ENCODE measurements at regions of chr1 and their contacts with region 1.

Region 1: GRCh38 chr1:63442141-63442475 is 74.7 kb downstream of the ALG6 start:
- DNase-seq: no peak
- H3K4me3 Mint-ChIP-seq: no peak overlapping the region
- H3K27ac Mint-ChIP-seq: no peak overlapping the region
- H3K4me1 Mint-ChIP-seq: no peaks in the 10 kb centered on the region
- H3K27me3 Mint-ChIP-seq: no peaks in the 10 kb centered on the region
- CTCF ChIP-seq: no peak

Region 2: GRCh38 chr1:62841587-62842169 is 600.4 kb before region 1 on chr1:
- CTCF ChIA-PET with region 1: no interaction called
- intact Hi-C with region 1: loop called (anchors 5 kb)
- DNase-seq: peak; percentile 44
- H3K4me3 Mint-ChIP-seq: no peak overlapping the region
- H3K27ac Mint-ChIP-seq: no peak overlapping the region
- H3K4me1 Mint-ChIP-seq: no peaks in the 10 kb centered on the region
- H3K27me3 Mint-ChIP-seq: no peaks in the 10 kb centered on the region
- CTCF ChIP-seq: peak; percentile 64

Region 3: GRCh38 chr1:63004868-63005267 is 437.2 kb before region 1 on chr1:
- CTCF ChIA-PET with region 1: no interaction called
- intact Hi-C with region 1: loop called (anchors 2 kb)
- DNase-seq: peak; percentile 44
- H3K4me3 Mint-ChIP-seq: no peak overlapping the region
- H3K27ac Mint-ChIP-seq: no peak overlapping the region
- H3K4me1 Mint-ChIP-seq: no peaks in the 10 kb centered on the region
- H3K27me3 Mint-ChIP-seq: peaks cover 59% of the 10 kb centered on the region
- CTCF ChIP-seq: peak; percentile 37

Region 4: GRCh38 chr1:63327417-63328139 is 114.5 kb before region 1 on chr1:
- CTCF ChIA-PET with region 1: no interaction called
- intact Hi-C with region 1: loop called (anchors 2 kb)
- DNase-seq: peak; percentile 85
- H3K4me3 Mint-ChIP-seq: no peak overlapping the region
- H3K27ac Mint-ChIP-seq: no peak overlapping the region
- H3K4me1 Mint-ChIP-seq: peaks cover 11% of the 10 kb centered on the region
- H3K27me3 Mint-ChIP-seq: peaks cover 61% of the 10 kb centered on the region
- CTCF ChIP-seq: peak; percentile 91

Region 5: GRCh38 chr1:63403386-63403785 is 38.7 kb before region 1 on chr1:
- CTCF ChIA-PET with region 1: no interaction called
- intact Hi-C with region 1: no loop called
- DNase-seq: no peak
- H3K4me3 Mint-ChIP-seq: no peak overlapping the region
- H3K27ac Mint-ChIP-seq: no peak overlapping the region
- H3K4me1 Mint-ChIP-seq: peaks cover 8% of the 10 kb centered on the region
- H3K27me3 Mint-ChIP-seq: no peaks in the 10 kb centered on the region
- CTCF ChIP-seq: no peak

Region 6: GRCh38 chr1:63935143-63935542 is 493.0 kb after region 1 on chr1:
- CTCF ChIA-PET with region 1: no interaction called
- intact Hi-C with region 1: no loop called
- DNase-seq: peak; percentile 53
- H3K4me3 Mint-ChIP-seq: no peak overlapping the region
- H3K27ac Mint-ChIP-seq: peak overlapping the region; percentile 30
- H3K4me1 Mint-ChIP-seq: peaks cover 51% of the 10 kb centered on the region
- H3K27me3 Mint-ChIP-seq: no peaks in the 10 kb centered on the region
- CTCF ChIP-seq: peak; percentile 39